Lower leg skin (tissue), 4 donors: ENCODE measurements at regions of chrX and their contacts with region 1.

Region 1: GRCh38 chrX:138128027-138128671 is 562.2 kb downstream of the ZIC3 start:
- DNase-seq: peak in 1 of 2 donors; percentile 9
- H3K4me3 ChIP-seq: no peak overlapping the region
- CTCF ChIP-seq: no peak
- POLR2A ChIP-seq: no peak

Region 2: GRCh38 chrX:138648568-138648967 is 520.4 kb after region 1 on chrX:
- intact Hi-C with region 1: no loop called
- DNase-seq: no peak
- H3K4me3 ChIP-seq: no peak overlapping the region
- CTCF ChIP-seq: no peak
- POLR2A ChIP-seq: no peak

Region 3: DNA sequence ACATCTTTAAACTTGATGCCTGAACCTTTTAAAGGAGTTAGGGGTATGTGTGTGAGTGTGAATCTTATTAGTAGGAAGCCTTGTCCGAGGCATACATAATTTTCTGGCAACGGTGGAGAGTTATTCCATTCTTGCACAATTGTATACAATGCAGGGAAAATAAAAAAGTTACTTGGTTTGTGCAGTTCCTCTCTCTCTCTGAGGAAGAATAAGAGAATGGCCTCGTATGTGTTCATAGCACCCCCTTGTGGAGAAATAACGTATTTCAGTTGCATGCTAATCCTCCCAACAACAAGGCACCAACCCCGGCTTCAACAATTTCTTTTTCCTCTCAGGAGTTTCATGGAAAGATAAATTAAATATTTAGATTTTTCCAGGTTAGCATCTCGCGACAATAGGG is 617.0 kb after region 1 on chrX:
- intact Hi-C with region 1: loop called (anchors 10 kb)
- DNase-seq: peak in 1 of 2 donors; percentile 14
- H3K4me3 ChIP-seq: no peak overlapping the region
- CTCF ChIP-seq: no peak
- POLR2A ChIP-seq: no peak